Activated naive CD4-positive, alpha-beta T cell treated with anti-CD3 and anti-CD28 coated beads for 36 hours (primary cell): ENCODE measurements at regions of chr22 and their contacts with region 1.

Region 1: GRCh38 chr22:38705235-38706100 is at the start of gene GTPBP1:
- DNase-seq: peak; percentile 99
- H3K4me3 Mint-ChIP-seq: peak within 1 kb of the TSS; percentile 86
- H3K27ac Mint-ChIP-seq: peak within 1 kb of the TSS; percentile 92
- H3K4me1 Mint-ChIP-seq: peaks cover 47% of the 10 kb centered on the region
- H3K27me3 Mint-ChIP-seq: no peaks in the 10 kb centered on the region
- total RNA-seq, gene GTPBP1: 98.9 to 107 TPM

Region 2: DNA sequence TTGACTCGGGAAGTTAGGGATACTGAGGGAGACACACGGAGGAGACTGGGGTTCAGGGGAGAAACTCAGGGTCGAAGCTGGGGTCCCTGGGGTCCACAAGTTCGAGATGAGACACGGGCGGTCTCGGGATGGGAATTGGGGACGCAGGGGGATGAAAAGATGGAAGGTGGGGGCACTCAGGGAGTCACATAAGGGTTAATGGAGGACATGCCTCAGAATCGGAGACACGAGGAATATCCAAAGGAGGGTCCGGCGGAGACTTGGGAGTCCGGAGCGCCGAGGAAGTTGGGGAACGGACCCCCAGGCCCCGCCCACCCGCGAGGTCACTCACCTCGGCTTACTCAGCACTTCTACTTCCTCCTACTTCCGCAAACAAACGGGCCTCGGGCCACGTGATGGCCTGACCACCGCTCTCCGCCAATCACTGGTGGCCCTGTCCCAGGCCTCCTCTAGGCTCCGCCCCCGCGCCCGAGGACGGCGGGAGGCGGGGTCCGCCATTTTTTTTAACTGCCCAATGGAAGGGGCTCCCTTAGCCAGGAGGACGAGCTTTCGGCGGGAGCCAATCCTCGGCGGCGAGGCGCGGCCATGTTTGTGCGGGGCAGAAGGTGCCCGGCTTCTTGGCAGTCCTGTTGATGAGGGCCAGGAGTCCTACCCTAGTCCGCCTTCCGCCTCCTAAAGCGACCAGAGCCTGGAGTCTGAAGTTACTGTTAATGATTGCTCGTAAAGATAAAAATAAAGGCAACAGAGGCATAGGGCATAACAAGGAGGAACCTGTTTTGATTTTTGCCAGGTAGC is 523.8 kb before region 1 on chr22 and contains the start of gene PLA2G6:
- CTCF ChIA-PET with region 1: no interaction called
- intact Hi-C with region 1: loop called (anchors 1 kb)
- DNase-seq: peak; percentile 99
- H3K4me3 Mint-ChIP-seq: peak within 1 kb of the TSS; percentile 94
- H3K27ac Mint-ChIP-seq: peak within 1 kb of the TSS; percentile 96
- H3K4me1 Mint-ChIP-seq: peaks cover 43% of the 10 kb centered on the region
- H3K27me3 Mint-ChIP-seq: no peaks in the 10 kb centered on the region
- total RNA-seq, gene PLA2G6: 80.2 to 85.3 TPM

Region 3: GRCh38 chr22:38506118-38506962 is 199.1 kb before region 1 on chr22 and contains the start of gene DDX17:
- CTCF ChIA-PET with region 1: no interaction called
- intact Hi-C with region 1: loop called (anchors 1 kb)
- DNase-seq: peak; percentile 97
- H3K4me3 Mint-ChIP-seq: peak within 1 kb of the TSS; percentile 98
- H3K27ac Mint-ChIP-seq: peak within 1 kb of the TSS; percentile 100
- H3K4me1 Mint-ChIP-seq: peaks cover 36% of the 10 kb centered on the region
- H3K27me3 Mint-ChIP-seq: no peaks in the 10 kb centered on the region
- total RNA-seq, gene DDX17: 319 to 341 TPM

Region 4: GRCh38 chr22:38631724-38632123 is 73.7 kb before region 1 on chr22:
- CTCF ChIA-PET with region 1: no interaction called
- intact Hi-C with region 1: no loop called
- DNase-seq: peak; percentile 9
- H3K4me3 Mint-ChIP-seq: no peak overlapping the region
- H3K27ac Mint-ChIP-seq: no peak overlapping the region
- H3K4me1 Mint-ChIP-seq: peaks cover 7% of the 10 kb centered on the region
- H3K27me3 Mint-ChIP-seq: no peaks in the 10 kb centered on the region

Region 5: DNA sequence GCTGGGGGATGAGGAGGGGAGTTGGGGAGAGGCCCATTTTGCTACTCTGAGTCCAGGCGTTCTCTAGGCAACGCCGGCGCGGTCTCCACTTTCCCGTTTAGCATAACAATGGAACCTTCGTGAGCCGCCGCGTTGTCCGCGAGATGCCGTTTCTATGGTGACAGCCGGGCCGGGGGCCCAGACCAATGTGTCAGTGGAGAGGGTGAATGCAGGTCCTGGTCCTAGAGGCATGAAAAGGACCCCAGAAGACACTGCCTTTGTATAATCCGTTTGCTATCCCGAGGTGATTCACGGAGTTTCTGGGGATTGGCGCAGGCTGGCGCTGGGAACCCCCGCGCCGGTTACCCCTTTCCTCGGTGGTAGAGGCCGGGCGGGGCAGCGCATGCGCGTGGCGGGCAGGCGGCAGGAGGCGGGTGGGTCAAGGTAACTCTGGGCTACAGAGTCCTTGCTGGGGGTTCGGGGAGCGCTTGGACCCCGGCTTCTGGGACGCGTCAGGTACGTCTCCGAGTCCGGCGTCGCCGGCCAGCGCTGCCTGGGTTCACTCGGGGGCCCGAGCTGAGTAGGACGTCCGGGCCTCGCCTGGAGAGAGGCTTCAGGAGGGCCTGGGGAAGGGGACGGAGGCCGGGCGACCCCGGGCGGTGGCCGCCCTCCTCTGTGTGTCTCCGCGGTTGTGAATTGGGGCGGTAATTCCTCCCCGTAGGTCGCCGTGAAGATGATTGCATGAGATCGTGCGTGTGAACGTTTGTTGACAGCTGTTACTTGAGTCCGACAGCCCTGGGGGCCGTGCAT is 49.0 kb before region 1 on chr22 and contains the starts of genes CBY1 and FAM227A:
- CTCF ChIA-PET with region 1: no interaction called
- intact Hi-C with region 1: loop called (anchors 1 kb)
- DNase-seq: peak; percentile 86
- H3K4me3 Mint-ChIP-seq: peak within 1 kb of the TSS; percentile 87
- H3K27ac Mint-ChIP-seq: peak within 1 kb of the TSS; percentile 95
- H3K4me1 Mint-ChIP-seq: peaks cover 14% of the 10 kb centered on the region
- H3K27me3 Mint-ChIP-seq: no peaks in the 10 kb centered on the region
- total RNA-seq, gene CBY1: 8.8 to 9.4 TPM
- total RNA-seq, gene FAM227A: 0.35 to 0.36 TPM

Region 6: GRCh38 chr22:38755911-38756532 is 50.6 kb after region 1 on chr22 and contains the start of gene SUN2:
- CTCF ChIA-PET with region 1: no interaction called
- intact Hi-C with region 1: loop called (anchors 1 kb)
- DNase-seq: peak; percentile 94
- H3K4me3 Mint-ChIP-seq: peak within 1 kb of the TSS; percentile 92
- H3K27ac Mint-ChIP-seq: peak within 1 kb of the TSS; percentile 92
- H3K4me1 Mint-ChIP-seq: peaks cover 52% of the 10 kb centered on the region
- H3K27me3 Mint-ChIP-seq: no peaks in the 10 kb centered on the region
- total RNA-seq, gene SUN2: 120 to 121 TPM

Region 7: DNA sequence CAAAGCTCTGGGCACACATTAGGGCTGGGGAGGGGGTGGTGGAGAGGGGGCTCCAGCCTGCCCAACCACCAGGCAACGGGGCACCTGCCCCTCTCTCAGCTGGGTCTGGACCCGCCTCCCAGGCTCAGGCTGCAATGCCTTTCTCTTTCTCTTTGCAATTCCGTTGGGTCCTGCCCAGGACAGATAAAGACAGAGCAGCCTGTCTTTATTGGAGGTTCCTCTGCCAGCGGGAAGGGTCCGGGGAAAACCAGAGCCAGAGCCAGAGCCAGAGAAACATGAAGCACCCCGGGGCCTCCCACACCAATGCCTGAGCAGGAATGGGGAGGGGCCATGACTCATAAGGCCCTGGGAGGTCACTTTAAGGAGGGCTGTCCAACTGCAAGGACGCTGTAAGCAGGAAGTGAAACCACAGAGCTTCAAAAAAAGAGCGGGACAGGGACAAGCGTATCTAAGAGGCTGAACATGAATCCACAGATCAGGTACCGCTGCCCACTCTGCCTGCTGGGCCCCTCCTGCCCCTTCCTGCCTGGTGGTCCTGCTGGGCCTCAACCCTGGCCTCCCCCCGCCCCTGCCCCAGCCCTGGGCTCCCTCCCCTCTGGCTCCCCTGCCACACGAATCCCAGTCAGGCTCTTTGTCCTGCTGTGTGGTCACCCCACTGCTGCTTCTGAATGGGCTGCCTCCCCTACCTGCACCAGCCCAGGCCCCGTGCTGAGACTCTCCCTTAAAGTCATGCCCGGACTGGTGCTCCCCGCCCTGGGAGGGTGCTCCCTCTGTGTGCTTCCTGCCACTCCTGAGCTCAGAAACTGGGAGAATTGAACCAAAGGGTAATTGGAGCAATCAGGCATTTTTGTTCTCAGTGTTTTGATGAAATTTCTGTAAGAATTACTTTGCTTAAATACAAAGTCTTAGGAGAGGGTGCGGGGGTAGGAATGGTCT is 276.8 kb after region 1 on chr22 and contains the start of gene APOBEC3B:
- CTCF ChIA-PET with region 1: no interaction called
- intact Hi-C with region 1: loop called (anchors 10 kb)
- DNase-seq: peak; percentile 87
- H3K4me3 Mint-ChIP-seq: peak within 1 kb of the TSS; percentile 60
- H3K27ac Mint-ChIP-seq: peak within 1 kb of the TSS; percentile 75
- H3K4me1 Mint-ChIP-seq: peaks cover 52% of the 10 kb centered on the region
- H3K27me3 Mint-ChIP-seq: no peaks in the 10 kb centered on the region
- total RNA-seq, gene APOBEC3B: 5.5 to 6.0 TPM

Region 8: DNA sequence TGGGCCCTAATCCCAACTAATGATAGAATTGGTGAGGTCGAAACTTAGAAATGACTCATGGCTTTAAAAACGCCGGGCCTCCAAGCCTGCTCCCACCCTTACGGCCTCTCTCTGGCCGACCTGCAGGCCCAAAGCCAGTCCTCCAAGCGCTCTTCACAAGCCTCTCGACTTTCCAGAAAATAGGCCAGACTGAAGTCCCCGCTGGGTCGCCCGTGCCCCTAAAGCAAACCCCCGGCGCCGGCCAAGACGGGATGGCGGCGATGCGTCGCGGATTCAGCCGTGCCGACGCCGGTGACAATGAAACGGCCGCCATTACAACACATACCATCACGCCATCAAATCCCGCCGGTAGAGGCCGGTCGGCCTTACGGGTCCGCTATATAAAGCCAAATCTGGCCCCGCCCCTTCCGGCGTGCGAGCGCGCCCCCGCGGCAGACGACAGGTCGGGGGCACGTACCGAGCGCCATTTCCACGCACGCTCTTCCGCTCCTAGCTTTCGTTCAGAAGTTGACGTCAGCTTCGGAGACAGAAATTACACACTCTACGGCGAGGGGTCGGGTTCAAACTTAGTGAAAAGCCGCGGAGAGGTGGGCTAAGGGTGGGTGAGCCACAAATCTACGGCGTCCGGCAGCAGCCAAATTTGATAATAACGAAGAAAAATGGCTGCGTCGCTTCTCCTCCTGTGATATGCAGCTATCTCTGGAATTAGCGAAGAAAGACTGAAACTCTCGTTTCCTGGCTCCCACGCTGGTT is 614.0 kb after region 1 on chr22 and contains the start of gene RPL3:
- CTCF ChIA-PET with region 1: no interaction called
- intact Hi-C with region 1: loop called (anchors 1 kb)
- DNase-seq: peak; percentile 94
- H3K4me3 Mint-ChIP-seq: peak within 1 kb of the TSS; percentile 99
- H3K27ac Mint-ChIP-seq: peak within 1 kb of the TSS; percentile 100
- H3K4me1 Mint-ChIP-seq: peaks cover 42% of the 10 kb centered on the region
- H3K27me3 Mint-ChIP-seq: no peaks in the 10 kb centered on the region
- total RNA-seq, gene RPL3: 3,434 to 3,511 TPM